RWPE1 (cell line): ENCODE measurements at regions of chr1 and their contacts with region 1.

Region 1: GRCh38 chr1:214808845-214809460 is 206.0 kb downstream of the CENPF start:
- DNase-seq: peak; percentile 42
- H3K27ac ChIP-seq: no peak overlapping the region
- CTCF ChIP-seq: peak; percentile 26; the same call in 1 of the 2 replicates

Region 2: DNA sequence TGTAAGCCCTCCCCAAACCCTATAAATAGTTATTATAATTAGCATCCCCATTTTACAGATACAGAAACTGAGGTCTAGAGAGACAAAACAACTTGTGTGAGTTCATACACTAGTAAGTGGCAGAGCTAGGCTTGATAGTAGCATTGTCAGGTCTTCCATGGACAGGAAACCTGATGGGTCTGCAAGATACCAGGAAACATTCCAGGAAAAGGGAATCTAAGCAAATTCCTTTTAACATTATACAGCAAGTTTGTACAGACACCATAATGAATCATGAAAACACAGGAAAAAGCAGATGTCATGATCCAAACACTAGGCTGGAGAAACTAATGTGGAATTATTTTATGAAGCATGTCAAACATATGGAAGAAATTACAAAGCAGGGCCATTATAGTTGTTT is 184.5 kb after region 1 on chr1:
- CTCF ChIA-PET with region 1: no interaction called
- POLR2A ChIA-PET with region 1: no interaction called
- DNase-seq: no peak
- H3K27ac ChIP-seq: no peak overlapping the region
- CTCF ChIP-seq: no peak

Region 3: GRCh38 chr1:215076318-215076717 is 267.4 kb after region 1 on chr1:
- CTCF ChIA-PET with region 1: interaction called, 3 read pairs
- POLR2A ChIA-PET with region 1: interaction called, 14 read pairs
- DNase-seq: peak; percentile 21
- H3K27ac ChIP-seq: no peak overlapping the region
- CTCF ChIP-seq: no peak; the same call in 1 of the 2 replicates

Region 4: GRCh38 chr1:215146341-215146826 is 337.4 kb after region 1 on chr1:
- CTCF ChIA-PET with region 1: interaction called, 19 read pairs
- POLR2A ChIA-PET with region 1: no interaction called
- DNase-seq: peak; percentile 33
- H3K27ac ChIP-seq: no peak overlapping the region
- CTCF ChIP-seq: peak; percentile 80